ENCODE measurements at regions of chr17 and their contacts with region 1.

Region 1: DNA sequence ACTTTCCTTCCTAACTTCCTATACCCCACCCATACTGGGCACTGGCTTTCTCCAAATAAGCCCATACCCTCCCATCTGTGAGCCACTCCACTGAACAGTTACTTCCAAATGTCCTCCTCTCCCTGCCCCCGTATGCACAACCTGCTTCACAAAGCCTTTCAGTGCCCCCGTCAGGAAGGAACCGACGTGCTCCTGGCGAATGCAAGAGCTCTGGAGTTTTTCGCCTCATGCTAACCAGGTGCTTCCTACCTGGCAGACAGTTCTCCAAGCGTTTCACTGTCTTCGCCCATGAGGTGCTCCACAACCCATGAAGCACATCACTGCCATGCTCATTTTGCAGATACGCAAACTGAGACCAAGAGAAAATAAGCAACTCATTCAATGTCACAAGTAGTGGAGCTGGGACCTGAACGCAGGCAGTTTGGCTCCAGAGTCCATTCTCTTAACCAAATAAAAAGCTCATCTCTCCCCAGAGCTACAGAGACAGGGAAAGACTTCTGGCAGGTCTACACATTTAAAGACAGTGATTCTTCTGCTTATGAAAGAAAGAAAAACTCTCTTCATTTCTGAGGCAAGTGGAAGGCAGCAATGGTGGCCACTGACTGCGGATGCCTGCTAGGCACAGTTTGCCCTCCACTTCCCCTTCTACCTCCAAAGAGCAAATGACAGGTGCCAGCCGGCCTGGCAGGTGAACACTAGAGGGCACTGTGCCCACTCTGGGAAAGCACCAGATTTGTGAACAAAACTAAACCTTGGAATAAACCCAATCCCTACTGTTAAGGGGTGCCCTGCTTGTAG is 23.8 kb downstream of the SPHK1 start:
- DNase-seq: peak; percentile 78
- CTCF ChIP-seq: peak; percentile 87

Region 2: DNA sequence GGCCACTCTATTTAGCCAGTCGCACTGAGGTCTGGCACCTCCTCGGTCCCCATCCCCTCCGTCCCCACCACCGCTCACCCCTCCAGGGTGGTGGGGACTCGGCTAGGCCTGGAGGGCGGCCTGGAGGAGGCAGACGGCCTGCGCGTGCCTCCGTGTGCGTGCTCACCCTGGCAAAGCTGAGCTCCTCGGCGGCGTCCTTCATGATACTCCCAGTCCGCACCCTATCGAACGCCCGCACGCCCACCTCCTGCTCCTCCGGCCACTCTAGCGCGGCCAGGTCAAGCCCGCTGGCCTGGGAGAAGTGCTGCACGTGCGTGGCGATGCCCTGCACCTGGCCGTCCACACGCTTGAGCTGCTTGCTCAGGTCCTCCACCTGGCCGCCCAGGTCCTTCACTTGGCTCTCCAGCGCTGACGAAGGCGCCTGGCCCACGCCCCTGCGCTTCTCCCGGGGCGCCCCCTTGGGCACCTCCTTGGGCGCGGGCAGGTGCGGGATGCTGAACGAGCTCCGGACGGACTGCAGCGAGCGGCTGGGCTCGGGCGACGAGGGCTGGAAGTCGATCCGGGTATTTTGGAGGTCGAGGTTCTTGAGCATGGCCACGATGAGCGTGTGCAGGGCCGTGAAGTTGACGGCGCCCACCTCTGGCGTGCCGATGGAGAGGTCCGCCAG is 100.8 kb before region 1 on chr17:
- in situ Hi-C with region 1: loop called (anchors 10 kb)
- DNase-seq: no peak
- CTCF ChIP-seq: no peak

Measured in GM13977 (cell line).